GM13976 (cell line): ENCODE measurements at regions of chr22 and their contacts with region 1.

Region 1: DNA sequence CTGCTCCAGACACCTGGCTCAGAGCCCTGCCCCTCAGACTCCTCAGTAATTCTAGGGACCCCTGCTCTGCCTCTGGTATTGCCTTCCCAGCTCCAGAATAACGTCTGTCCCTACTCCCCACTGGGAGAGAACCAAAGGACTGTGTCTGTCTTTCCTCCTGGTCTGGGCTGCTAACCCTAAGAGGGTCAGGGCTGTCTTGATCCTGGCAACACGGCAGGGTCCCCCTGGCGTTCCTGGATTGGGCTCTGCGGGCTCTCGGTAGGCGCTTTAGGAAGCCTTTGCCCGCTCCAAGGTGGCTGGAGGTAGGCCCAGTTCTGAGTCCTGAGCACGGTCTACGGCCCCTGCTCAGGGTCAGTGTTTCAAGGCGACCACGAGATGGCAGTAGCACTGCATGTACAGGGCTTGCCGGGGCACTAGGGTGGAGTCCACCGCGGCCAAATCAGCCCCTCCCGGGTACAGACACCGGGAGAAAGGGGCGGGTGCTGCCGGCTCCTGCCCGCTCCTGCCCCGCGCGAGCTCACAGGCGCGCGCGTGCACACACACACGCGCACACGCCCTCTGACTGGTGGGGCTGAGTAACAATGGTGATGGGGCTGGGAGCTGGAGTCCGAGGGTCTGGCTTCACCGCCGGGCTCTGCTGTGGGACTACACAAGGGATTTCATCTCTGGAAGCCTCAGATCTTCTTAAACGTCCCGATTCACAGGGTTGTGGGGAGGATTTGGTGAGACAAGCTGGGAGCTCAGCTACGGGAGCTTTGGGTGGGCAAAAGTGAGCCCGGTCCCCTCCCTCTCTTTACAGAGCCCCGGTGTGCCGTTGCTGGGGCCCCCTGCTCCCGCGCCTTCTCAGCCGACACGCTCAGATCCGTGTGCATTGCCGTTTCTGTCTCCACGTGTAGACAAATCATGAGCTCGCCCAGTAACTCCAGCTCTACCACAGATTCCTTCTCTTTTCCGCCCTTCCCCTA is 30.1 kb upstream of the HMOX1 start:
- DNase-seq: peak; percentile 95
- CTCF ChIP-seq: peak; percentile 85

Region 2: GRCh38 chr22:35257321-35258190 is 93.3 kb before region 1 on chr22 and contains the start of gene HMGXB4:
- in situ Hi-C with region 1: no loop called
- DNase-seq: peak; percentile 94
- CTCF ChIP-seq: no peak

Region 3: DNA sequence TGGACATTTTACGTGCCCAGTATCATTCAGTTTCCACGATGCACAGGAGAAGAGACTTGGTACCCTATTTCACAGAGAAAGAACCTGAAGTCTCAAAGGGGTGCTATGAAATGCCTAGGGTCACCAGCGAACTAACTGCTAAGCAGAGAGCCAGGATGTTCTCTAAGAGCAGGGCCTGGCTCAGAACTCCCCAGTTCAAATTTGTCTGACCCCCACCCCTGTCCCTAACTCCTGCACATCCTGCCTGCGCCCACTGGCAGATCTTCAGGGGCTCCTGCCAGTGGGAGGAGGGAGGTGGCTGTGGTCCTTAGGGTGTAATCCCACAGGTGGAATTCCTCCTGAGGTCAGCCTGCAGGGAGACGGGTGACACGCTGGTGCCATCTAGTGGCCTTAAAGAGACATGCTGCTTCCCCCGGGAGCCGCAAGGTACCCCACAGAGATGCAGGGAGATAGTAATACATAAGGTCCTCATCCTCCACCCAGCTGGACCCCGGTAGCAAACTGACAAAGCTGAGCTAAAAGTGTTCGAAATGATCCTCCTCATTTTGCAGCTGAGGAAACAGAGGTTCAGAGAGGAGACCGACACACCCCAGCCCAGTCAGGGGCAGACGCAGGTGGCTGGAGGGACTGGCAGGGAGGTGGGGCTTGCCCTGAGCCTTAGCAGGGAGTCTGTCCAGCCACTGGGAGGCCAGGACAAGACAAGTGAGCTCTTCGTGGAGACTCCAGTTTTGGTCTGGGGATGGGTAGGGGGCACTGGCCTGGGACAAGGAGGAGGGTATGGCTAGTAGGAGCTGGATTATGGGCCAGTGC is 232.2 kb after region 1 on chr22:
- in situ Hi-C with region 1: loop called (anchors 10 kb)
- DNase-seq: peak; percentile 89
- CTCF ChIP-seq: peak; percentile 83